Activated CD4-positive, alpha-beta memory T cell treated with anti-CD3 and anti-CD28 coated beads for 36 hours (primary cell): ENCODE measurements at regions of chr22 and their contacts with region 1.

Region 1: DNA sequence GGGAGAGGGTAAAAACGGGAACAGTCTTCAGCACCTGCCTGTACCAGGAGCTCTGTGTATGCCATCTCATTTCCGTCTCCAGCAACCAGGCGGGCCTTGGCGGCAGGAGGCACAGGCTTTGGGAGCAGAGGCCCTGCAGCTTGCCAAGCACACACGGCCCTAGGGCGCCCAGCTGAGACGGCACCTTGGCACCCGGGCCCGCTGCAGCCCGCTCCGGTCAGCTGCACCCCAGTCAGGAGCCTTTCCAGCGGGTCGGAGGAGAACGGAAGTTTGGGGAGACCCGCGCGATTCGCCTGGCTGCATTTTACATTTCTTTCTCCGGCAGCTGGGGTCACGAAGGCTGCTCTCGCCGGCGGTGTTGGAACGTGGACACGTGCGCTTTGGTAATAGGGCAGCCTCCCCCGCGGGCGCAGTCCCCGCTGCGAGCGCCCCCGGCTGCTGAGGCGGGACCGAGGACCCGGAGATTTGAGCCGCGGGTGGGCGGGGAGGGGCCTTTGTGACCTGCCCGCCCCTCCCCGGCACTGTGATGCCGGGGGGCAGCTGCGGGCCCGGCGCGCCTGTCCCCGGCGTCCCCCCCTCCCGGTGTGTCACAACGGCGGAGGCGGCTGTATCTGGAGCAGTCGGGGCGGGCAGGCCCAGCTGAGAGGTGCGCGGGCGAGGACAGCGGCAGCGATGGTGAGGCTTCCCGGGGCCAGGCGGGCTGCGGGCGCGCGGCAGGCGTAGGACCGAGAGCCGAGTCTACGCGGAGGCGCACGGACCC is at the start of gene TUBA8:
- DNase-seq: peak; percentile 59
- H3K4me3 Mint-ChIP-seq: peak within 1 kb of the TSS; percentile 61
- H3K27ac Mint-ChIP-seq: no peak within 1 kb of the TSS
- H3K4me1 Mint-ChIP-seq: peaks cover 46% of the 10 kb centered on the region
- H3K27me3 Mint-ChIP-seq: peaks cover 22% of the 10 kb centered on the region
- total RNA-seq, gene TUBA8: 3.3 to 4.3 TPM

Region 2: GRCh38 chr22:18096823-18097222 is 13.6 kb before region 1 on chr22:
- CTCF ChIA-PET with region 1: interaction called, 4 read pairs
- POLR2A ChIA-PET with region 1: interaction called, 9 read pairs
- intact Hi-C with region 1: loop called (anchors 1 kb)
- DNase-seq: peak; percentile 56
- H3K4me3 Mint-ChIP-seq: no peak overlapping the region
- H3K27ac Mint-ChIP-seq: peak overlapping the region; percentile 16
- H3K4me1 Mint-ChIP-seq: peaks cover 24% of the 10 kb centered on the region
- H3K27me3 Mint-ChIP-seq: no peaks in the 10 kb centered on the region

Region 3: GRCh38 chr22:18152519-18152918 is 42.1 kb after region 1 on chr22:
- CTCF ChIA-PET with region 1: interaction called, 4 read pairs
- POLR2A ChIA-PET with region 1: interaction called, 5 read pairs
- intact Hi-C with region 1: loop called (anchors 1 kb)
- DNase-seq: peak; percentile 29
- H3K4me3 Mint-ChIP-seq: no peak overlapping the region
- H3K27ac Mint-ChIP-seq: no peak overlapping the region
- H3K4me1 Mint-ChIP-seq: peaks cover 19% of the 10 kb centered on the region
- H3K27me3 Mint-ChIP-seq: no peaks in the 10 kb centered on the region